ENCODE measurements at regions of chr12 and their contacts with region 1.

Region 1: DNA sequence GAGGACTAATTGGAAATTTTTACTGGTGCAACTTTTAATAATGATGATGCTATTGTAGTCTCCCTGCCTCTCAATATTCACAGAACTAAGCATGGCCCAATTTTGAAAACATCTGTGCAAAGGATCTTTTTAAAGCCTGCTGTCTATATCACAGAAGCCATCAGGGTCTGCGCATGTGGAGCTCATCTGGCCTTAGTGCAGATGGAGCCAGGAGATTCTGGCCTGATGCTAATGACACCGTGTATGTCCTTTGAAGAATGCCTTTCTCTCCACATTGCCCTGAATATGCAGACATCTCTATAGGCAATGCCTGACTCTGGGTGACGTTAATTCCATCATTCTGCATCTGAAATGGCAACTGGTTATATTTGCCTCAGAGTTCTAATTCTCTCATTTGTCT is 1205.9 kb downstream of the AACS start:
- DNase-seq: no peak
- H3K4me3 ChIP-seq: no peak overlapping the region
- CTCF ChIP-seq: no peak
- POLR2A ChIP-seq: no peak

Region 2: GRCh38 chr12:127761880-127762279 is 1490.7 kb after region 1 on chr12:
- intact Hi-C with region 1: loop called (anchors 5 kb)
- DNase-seq: no peak
- H3K4me3 ChIP-seq: no peak overlapping the region
- CTCF ChIP-seq: no peak
- POLR2A ChIP-seq: no peak

Measured in lower leg skin (tissue), 4 donors.